ENCODE measurements at regions of chr3 and their contacts with region 1.

Region 1: GRCh38 chr3:179147873-179148615 is at the start of gene PIK3CA:
- DNase-seq: peak; percentile 99
- H3K4me3 ChIP-seq: peak within 1 kb of the TSS; percentile 83 to 99 (median 93)
- H3K27ac ChIP-seq: peak within 1 kb of the TSS; percentile 75
- H3K4me1 ChIP-seq: peaks cover 15% of the 10 kb centered on the region
- H3K27me3 ChIP-seq: no peaks in the 10 kb centered on the region
- CTCF ChIP-seq: no peak
- POLR2A ChIP-seq: peak; percentile 43
- total RNA-seq, gene PIK3CA: 25.6 and 25.8 TPM in 2 replicates

Region 2: DNA sequence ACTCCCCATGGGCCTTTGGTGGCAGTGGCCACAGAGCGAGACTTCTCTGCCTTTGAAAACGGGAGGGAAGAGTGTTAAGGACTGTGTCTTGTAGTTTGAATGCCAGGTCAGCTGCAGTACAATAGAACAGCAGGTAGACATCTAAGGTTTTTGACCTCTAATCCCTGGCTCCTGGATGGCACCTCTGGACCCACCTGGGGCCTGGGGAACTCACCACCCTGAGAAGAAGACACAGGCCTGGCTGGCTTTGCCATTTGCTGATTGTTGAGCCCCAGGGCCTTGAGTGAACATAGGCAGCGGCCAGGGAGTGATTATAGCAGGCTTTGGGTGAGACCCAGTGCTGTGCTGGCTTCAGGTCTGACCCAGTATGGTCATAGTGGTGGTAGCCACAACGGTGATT is 142.8 kb before region 1 on chr3:
- CTCF ChIA-PET with region 1: no interaction called
- POLR2A ChIA-PET with region 1: no interaction called
- dilution Hi-C with region 1: no loop called
- intact Hi-C with region 1: no loop called
- DNase-seq: no peak
- H3K4me3 ChIP-seq: no peak overlapping the region
- H3K27ac ChIP-seq: no peak overlapping the region
- H3K4me1 ChIP-seq: no peaks in the 10 kb centered on the region
- H3K27me3 ChIP-seq: no peaks in the 10 kb centered on the region
- CTCF ChIP-seq: no peak
- POLR2A ChIP-seq: no peak

Region 3: GRCh38 chr3:179015551-179016020 is 132.5 kb before region 1 on chr3:
- CTCF ChIA-PET with region 1: interaction called, 9 read pairs
- POLR2A ChIA-PET with region 1: no interaction called
- dilution Hi-C with region 1: no loop called
- intact Hi-C with region 1: loop called (anchors 1 kb)
- DNase-seq: peak; percentile 86
- H3K4me3 ChIP-seq: no peak overlapping the region
- H3K27ac ChIP-seq: no peak overlapping the region
- H3K4me1 ChIP-seq: peaks cover 6% of the 10 kb centered on the region
- H3K27me3 ChIP-seq: no peaks in the 10 kb centered on the region
- CTCF ChIP-seq: peak; percentile 59 to 62
- POLR2A ChIP-seq: no peak

Region 4: GRCh38 chr3:179181021-179181472 is 33.0 kb after region 1 on chr3:
- CTCF ChIA-PET with region 1: interaction called, 3 read pairs
- POLR2A ChIA-PET with region 1: no interaction called
- dilution Hi-C with region 1: no loop called
- intact Hi-C with region 1: loop called (anchors 2 kb)
- DNase-seq: peak; percentile 77
- H3K4me3 ChIP-seq: no peak overlapping the region
- H3K27ac ChIP-seq: peak overlapping the region; percentile 43
- H3K4me1 ChIP-seq: peaks cover 17% of the 10 kb centered on the region
- H3K27me3 ChIP-seq: no peaks in the 10 kb centered on the region
- CTCF ChIP-seq: no peak
- POLR2A ChIP-seq: no peak

Region 5: GRCh38 chr3:179272385-179272784 is 124.3 kb after region 1 on chr3:
- CTCF ChIA-PET with region 1: interaction called, 23 read pairs
- POLR2A ChIA-PET with region 1: interaction called, 5 read pairs
- dilution Hi-C with region 1: no loop called
- intact Hi-C with region 1: loop called (anchors 1 kb)
- DNase-seq: peak; percentile 49
- H3K4me3 ChIP-seq: no peak overlapping the region
- H3K27ac ChIP-seq: no peak overlapping the region
- H3K4me1 ChIP-seq: peaks cover 11% of the 10 kb centered on the region
- H3K27me3 ChIP-seq: no peaks in the 10 kb centered on the region
- CTCF ChIP-seq: peak; percentile 33 to 34
- POLR2A ChIP-seq: no peak

Region 6: DNA sequence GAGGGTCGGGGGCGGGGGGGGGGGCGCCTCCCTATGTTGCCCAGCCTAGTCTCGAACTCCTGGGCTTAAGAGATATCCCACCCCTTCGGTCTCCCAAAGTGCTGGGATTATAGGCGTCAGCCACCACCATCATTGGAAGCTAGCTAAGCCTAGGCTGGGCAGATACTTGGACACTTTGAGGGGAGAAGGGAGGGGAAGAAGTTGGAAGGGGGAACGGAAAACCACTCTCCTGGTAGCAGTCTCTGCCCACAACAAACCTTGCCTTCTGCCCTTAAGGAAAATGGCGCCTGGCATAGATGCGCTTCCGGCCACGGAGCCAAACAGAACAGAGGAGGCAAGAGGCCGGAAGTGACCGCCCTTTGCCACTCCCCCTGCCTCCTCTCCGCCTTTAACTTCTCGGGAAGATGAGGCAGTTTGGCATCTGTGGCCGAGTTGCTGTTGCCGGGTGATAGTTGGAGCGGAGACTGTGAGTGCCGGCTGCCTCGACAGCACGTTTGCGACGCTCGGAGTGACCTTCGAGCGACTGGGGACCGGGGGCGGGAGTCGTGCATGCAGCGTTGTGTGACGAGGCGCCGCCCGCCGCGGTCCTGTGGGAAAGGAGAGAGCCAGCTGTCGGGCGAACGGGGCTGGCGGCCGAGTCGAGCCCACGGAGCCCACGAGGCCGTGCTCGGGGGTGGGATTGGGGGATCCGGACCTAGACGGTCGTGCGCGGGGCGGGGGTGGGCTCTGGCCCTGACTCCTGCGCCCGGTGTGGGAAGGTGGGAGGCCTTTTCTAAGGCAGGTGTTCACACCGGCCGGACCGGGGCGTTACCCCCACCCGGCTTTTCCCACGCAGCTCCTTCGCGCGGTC is 199.5 kb after region 1 on chr3 and contains the start of gene MFN1:
- CTCF ChIA-PET with region 1: no interaction called
- POLR2A ChIA-PET with region 1: interaction called, 3 read pairs
- dilution Hi-C with region 1: no loop called
- intact Hi-C with region 1: loop called (anchors 1 kb)
- DNase-seq: peak; percentile 97
- H3K4me3 ChIP-seq: peak within 1 kb of the TSS; percentile 38 to 99 (median 79)
- H3K27ac ChIP-seq: peak within 1 kb of the TSS; percentile 19
- H3K4me1 ChIP-seq: peaks cover 9% of the 10 kb centered on the region
- H3K27me3 ChIP-seq: no peaks in the 10 kb centered on the region
- CTCF ChIP-seq: no peak
- POLR2A ChIP-seq: peak; percentile 92
- total RNA-seq, gene MFN1: 42.9 and 52.9 TPM in 2 replicates

Region 7: GRCh38 chr3:179604321-179605078 is 456.5 kb after region 1 on chr3 and contains the starts of genes MRPL47 and NDUFB5:
- CTCF ChIA-PET with region 1: no interaction called
- POLR2A ChIA-PET with region 1: no interaction called
- dilution Hi-C with region 1: no loop called
- intact Hi-C with region 1: loop called (anchors 2 kb)
- DNase-seq: peak; percentile 97
- H3K4me3 ChIP-seq: peak within 1 kb of the TSS; percentile 59 to 94 (median 77)
- H3K27ac ChIP-seq: peak within 1 kb of the TSS; percentile 84
- H3K4me1 ChIP-seq: peaks cover 14% of the 10 kb centered on the region
- H3K27me3 ChIP-seq: no peaks in the 10 kb centered on the region
- CTCF ChIP-seq: no peak
- POLR2A ChIP-seq: peak; percentile 94
- total RNA-seq, gene MRPL47: 47.0 and 51.2 TPM in 2 replicates
- total RNA-seq, gene NDUFB5: 68.3 and 74.9 TPM in 2 replicates

Measured in endothelial cell of umbilical vein (primary cell).